Activated CD8-positive, alpha-beta T cell treated with anti-CD3 and anti-CD28 coated beads for 36 hours (primary cell): ENCODE measurements at regions of chr17 and their contacts with region 1.

Region 1: DNA sequence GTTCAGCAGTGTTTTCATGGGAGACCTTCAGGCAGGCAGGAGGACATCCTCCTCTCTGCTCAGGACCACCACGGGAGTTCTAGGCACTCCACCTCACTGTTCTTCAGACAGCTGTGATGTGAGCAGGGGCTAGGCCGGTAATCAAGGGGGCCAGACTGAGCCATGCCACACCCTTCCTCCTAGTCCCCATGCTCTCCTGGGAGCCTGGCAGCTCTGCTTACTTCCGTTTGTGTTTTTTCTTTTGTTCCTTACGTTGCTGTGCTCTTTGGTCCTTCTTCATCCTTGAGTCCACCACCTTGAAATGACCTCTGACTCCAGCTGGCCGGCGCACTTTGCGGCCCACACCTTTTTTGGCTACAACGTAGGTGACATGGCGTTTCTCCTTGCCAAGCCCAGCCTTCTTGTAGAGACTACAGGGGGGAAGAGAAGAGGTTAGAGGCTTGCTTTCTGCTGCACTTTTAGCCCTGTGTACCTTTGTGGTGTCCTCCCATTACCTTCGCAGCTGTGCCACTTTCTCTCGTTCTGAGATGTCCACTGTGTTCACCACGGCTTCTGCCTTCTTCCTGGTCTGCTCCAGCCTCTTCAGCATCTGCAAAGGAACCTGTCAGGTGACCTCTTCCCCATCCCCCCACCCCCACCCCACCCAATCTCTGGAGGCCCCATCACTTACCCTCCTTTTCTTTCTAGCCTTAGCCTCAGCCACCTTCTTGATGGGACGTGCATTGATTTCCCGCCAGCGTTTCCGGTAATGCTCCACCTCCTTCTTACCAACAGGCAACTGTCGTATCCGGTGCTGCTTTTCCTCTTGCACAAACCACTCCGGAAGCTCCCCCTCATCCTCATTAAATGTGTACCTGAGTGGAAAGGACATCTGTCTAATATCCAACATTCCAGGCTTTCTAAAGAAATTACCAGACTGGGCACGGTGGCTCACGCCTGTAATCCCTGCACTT is 7.4 kb upstream of the PSMC5 start:
- DNase-seq: peak; percentile 34
- ATAC-seq: peak; percentile 34
- H3K4me3 Mint-ChIP-seq: peak overlapping the region; percentile 33
- H3K27ac Mint-ChIP-seq: peak overlapping the region; percentile 87
- H3K4me1 Mint-ChIP-seq: peaks cover 32% of the 10 kb centered on the region
- H3K27me3 Mint-ChIP-seq: no peaks in the 10 kb centered on the region
- CTCF ChIP-seq: no peak

Region 2: GRCh38 chr17:63707151-63707550 is 112.7 kb before region 1 on chr17:
- CTCF ChIA-PET with region 1: no interaction called
- POLR2A ChIA-PET with region 1: no interaction called
- intact Hi-C with region 1: no loop called
- DNase-seq: no peak
- ATAC-seq: no peak
- H3K4me3 Mint-ChIP-seq: no peak overlapping the region
- H3K27ac Mint-ChIP-seq: peak overlapping the region; percentile 81
- H3K4me1 Mint-ChIP-seq: peaks cover 76% of the 10 kb centered on the region
- H3K27me3 Mint-ChIP-seq: no peaks in the 10 kb centered on the region
- CTCF ChIP-seq: no peak

Region 3: DNA sequence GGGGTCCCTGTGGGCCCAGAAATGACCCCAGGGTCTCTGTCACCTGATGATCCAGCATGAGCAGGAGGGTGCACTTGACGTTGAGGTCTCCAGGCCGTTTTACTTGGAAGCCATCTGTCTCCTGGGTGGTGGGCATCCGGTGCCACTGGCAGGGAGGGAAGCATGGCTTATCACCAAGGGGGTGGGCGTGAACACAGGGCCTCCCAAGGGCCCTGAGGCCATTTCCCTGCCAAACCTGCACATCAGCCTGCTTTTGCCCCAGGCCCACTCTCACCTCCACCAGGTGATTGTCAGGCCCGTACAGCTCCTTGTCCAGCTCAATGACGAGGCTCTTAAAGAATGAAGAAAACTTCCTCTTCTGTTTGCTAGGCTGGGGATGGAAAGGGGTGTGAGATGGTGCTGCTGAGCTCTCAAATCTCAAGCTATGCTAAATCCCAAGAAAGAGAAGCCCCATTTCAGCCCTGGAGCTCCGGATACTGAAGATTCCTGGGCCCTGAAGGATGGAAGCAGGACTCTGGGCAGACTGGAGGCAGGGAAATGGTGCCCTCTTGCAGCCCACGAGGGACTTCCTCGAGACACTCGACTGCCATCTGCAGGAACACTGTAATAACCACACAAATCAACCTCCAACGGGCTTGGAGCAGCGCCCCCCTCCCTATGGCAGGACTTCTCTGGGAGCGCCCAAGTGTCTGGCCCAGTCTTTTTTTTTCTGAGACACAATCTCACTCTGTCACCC is 14.7 kb after region 1 on chr17:
- CTCF ChIA-PET with region 1: interaction called, 9 read pairs
- POLR2A ChIA-PET with region 1: interaction called, 188 read pairs
- intact Hi-C with region 1: no loop called
- DNase-seq: peak; percentile 61
- ATAC-seq: peak; percentile 83
- H3K4me3 Mint-ChIP-seq: no peak overlapping the region
- H3K27ac Mint-ChIP-seq: peak overlapping the region; percentile 69
- H3K4me1 Mint-ChIP-seq: peaks cover 47% of the 10 kb centered on the region
- H3K27me3 Mint-ChIP-seq: no peaks in the 10 kb centered on the region
- CTCF ChIP-seq: peak; percentile 58

Region 4: DNA sequence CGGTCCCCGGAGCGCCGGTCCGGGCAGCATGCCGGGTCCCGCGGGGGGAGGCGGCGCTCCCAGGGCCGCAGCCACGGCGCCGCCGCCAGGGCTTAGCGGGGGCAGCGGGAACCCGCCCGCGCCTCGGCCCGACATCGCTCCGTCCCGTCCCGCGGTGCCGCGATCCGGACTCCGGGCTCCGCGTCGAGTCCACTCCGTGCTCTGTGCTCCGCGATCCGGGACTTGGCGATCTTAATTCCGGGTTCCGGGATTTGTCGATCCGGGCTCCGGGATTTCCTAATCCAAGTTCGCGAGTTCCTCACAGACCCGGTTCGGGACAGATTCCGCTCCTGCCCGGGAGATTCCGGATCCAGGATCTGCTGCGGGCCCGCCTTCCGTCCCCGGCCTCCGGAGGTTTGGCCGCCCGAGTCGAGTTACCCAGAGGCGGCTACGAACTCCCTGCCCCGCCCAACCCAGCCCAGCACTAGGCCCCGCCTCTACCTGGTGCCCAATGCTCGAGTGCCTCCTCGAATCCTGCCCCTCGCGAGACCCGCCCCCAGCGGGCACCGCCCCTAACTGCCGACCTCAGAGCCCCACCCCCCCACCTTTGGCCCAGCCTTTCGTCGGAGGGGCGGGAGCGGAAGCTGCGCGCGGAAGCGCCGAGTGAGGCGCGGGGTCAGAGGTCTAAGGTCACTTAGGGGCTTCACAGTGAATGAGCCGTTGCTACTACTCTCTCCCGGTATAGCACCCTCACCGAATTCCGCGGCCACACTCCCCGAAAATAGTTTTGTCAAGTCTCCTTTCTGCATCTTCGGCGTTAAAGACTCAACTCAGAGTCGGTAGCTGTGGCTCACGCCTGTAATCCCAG is 22.9 kb after region 1 on chr17 and contains the start of gene SMARCD2:
- CTCF ChIA-PET with region 1: interaction called, 3 read pairs
- POLR2A ChIA-PET with region 1: interaction called, 188 read pairs
- intact Hi-C with region 1: no loop called
- DNase-seq: peak; percentile 99
- ATAC-seq: peak; percentile 92
- H3K4me3 Mint-ChIP-seq: peak within 1 kb of the TSS; percentile 98
- H3K27ac Mint-ChIP-seq: peak within 1 kb of the TSS; percentile 95
- H3K4me1 Mint-ChIP-seq: peaks cover 23% of the 10 kb centered on the region
- H3K27me3 Mint-ChIP-seq: no peaks in the 10 kb centered on the region
- CTCF ChIP-seq: no peak
- total RNA-seq, gene SMARCD2: 99.4 to 103 TPM